A673 (cell line): ENCODE measurements at regions of chr3 and their contacts with region 1.

Region 1: DNA sequence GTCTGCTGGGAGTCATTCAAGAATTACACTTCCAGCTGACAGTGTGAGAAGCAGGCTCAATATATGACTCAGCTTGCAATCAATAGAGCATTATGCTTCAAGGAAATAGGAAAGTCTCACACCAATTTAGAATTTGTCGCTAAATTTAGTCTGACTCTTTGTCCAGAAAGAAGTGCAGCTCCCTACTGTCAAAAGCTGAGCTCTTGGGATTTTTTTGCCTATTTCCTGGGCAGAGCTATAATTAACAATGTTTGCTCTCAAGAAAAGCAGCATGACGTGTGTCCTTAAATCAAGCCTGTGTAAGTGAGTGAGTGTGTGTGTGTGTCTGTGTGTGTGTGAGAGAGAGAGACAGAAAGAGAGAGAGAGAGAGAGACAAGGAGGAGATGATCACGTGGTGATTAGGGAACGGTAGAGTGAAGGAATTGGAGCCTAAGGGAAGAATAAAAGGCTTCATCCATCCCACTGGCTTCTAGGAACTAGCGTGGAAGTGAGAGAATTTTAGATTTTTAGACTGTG is 16.4 kb upstream of the SLC35G2 start:
- DNase-seq: peak; percentile 98
- H3K4me3 ChIP-seq: no peak overlapping the region
- H3K27ac ChIP-seq: peak overlapping the region; percentile 71
- H3K4me1 ChIP-seq: peaks cover 33% of the 10 kb centered on the region
- H3K27me3 ChIP-seq: no peaks in the 10 kb centered on the region
- CTCF ChIP-seq: no peak

Region 2: GRCh38 chr3:136838641-136839555 is 36.4 kb after region 1 on chr3:
- CTCF ChIA-PET with region 1: no interaction called
- POLR2A ChIA-PET with region 1: no interaction called
- intact Hi-C with region 1: loop called (anchors 2 kb)
- DNase-seq: peak; percentile 96
- H3K4me3 ChIP-seq: peak overlapping the region; percentile 5
- H3K27ac ChIP-seq: peak overlapping the region; percentile 91
- H3K4me1 ChIP-seq: peaks cover 67% of the 10 kb centered on the region
- H3K27me3 ChIP-seq: no peaks in the 10 kb centered on the region
- CTCF ChIP-seq: no peak

Region 3: GRCh38 chr3:136989781-136990524 is 187.4 kb after region 1 on chr3:
- CTCF ChIA-PET with region 1: no interaction called
- POLR2A ChIA-PET with region 1: interaction called, 15 read pairs
- intact Hi-C with region 1: no loop called
- DNase-seq: no peak
- H3K4me3 ChIP-seq: no peak overlapping the region
- H3K27ac ChIP-seq: no peak overlapping the region
- H3K4me1 ChIP-seq: peaks cover 6% of the 10 kb centered on the region
- H3K27me3 ChIP-seq: no peaks in the 10 kb centered on the region
- CTCF ChIP-seq: no peak